ENCODE measurements at regions of chr5 and their contacts with region 1.

Region 1: GRCh38 chr5:150398722-150399523 is 13.8 kb downstream of the CD74 start:
- DNase-seq: peak; percentile 38
- ATAC-seq: peak; percentile 56
- H3K4me3 Mint-ChIP-seq: no peak overlapping the region
- H3K27ac Mint-ChIP-seq: no peak overlapping the region
- H3K4me1 Mint-ChIP-seq: no peaks in the 10 kb centered on the region
- H3K27me3 Mint-ChIP-seq: no peaks in the 10 kb centered on the region

Region 2: GRCh38 chr5:150409638-150410523 is 11.0 kb after region 1 on chr5:
- CTCF ChIA-PET with region 1: interaction called, 22 read pairs
- POLR2A ChIA-PET with region 1: interaction called, 11 read pairs
- intact Hi-C with region 1: no loop called
- DNase-seq: peak; percentile 66
- ATAC-seq: peak; percentile 40
- H3K4me3 Mint-ChIP-seq: peak overlapping the region; percentile 99
- H3K27ac Mint-ChIP-seq: peak overlapping the region; percentile 99
- H3K4me1 Mint-ChIP-seq: peaks cover 36% of the 10 kb centered on the region
- H3K27me3 Mint-ChIP-seq: no peaks in the 10 kb centered on the region

Measured in activated CD4-positive, alpha-beta T cell treated with anti-CD3 and anti-CD28 coated beads for 36 hours (primary cell).